Right ventricle myocardium superior (tissue), 1 donor: ENCODE measurements at regions of chr16 and their contacts with region 1.

Region 1: GRCh38 chr16:55543472-55543871 is 23.0 kb upstream of the CAPNS2 start:
- DNase-seq: no peak
- ATAC-seq: peak; percentile 61

Region 2: GRCh38 chr16:55465077-55465896 is 78.2 kb before region 1 on chr16:
- intact Hi-C with region 1: loop called (anchors 2 kb)
- DNase-seq: peak; percentile 94
- ATAC-seq: peak; percentile 97

Region 3: DNA sequence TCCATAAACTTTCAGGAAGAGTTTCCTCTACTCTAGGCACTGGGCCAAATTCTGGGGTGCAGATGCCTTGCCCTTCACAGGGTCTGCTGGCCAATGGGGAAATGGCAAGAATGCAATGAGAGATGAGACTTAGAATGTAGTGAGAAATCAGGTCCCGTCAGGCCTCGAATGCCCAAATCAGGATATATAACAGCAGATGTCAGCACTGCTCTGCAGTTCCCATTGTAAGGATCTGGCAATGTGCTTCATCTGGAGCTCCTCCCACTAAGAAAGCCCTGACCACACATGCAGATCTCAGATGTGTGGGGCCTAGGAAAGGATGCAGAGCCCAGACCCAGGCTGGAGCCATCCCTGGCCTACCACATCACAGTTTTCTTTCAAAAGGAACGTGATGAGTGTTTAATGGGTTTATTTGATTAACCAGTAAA is 48.5 kb before region 1 on chr16:
- intact Hi-C with region 1: loop called (anchors 10 kb)
- DNase-seq: no peak
- ATAC-seq: peak; percentile 74

Region 4: GRCh38 chr16:55701442-55702319 is 158.2 kb after region 1 on chr16:
- intact Hi-C with region 1: loop called (anchors 10 kb)
- DNase-seq: peak; percentile 71
- ATAC-seq: peak; percentile 73